ENCODE measurements at regions of chr7 and their contacts with region 1.

Region 1: GRCh38 chr7:1961701-1962276 is 271.0 kb downstream of the MAD1L1 start:
- DNase-seq: peak; percentile 31
- ATAC-seq: no peak
- H3K4me3 ChIP-seq: no peak overlapping the region
- H3K27ac ChIP-seq: peak overlapping the region; percentile 71
- H3K4me1 ChIP-seq: no peaks in the 10 kb centered on the region
- H3K27me3 ChIP-seq: no peaks in the 10 kb centered on the region
- CTCF ChIP-seq: no peak

Region 2: GRCh38 chr7:1732072-1732471 is 229.7 kb before region 1 on chr7:
- CTCF ChIA-PET with region 1: no interaction called
- POLR2A ChIA-PET with region 1: interaction called, 11 read pairs
- intact Hi-C with region 1: no loop called
- DNase-seq: no peak
- ATAC-seq: no peak
- H3K4me3 ChIP-seq: no peak overlapping the region
- H3K27ac ChIP-seq: no peak overlapping the region
- H3K4me1 ChIP-seq: no peaks in the 10 kb centered on the region
- H3K27me3 ChIP-seq: peaks cover 58% of the 10 kb centered on the region
- CTCF ChIP-seq: no peak

Region 3: DNA sequence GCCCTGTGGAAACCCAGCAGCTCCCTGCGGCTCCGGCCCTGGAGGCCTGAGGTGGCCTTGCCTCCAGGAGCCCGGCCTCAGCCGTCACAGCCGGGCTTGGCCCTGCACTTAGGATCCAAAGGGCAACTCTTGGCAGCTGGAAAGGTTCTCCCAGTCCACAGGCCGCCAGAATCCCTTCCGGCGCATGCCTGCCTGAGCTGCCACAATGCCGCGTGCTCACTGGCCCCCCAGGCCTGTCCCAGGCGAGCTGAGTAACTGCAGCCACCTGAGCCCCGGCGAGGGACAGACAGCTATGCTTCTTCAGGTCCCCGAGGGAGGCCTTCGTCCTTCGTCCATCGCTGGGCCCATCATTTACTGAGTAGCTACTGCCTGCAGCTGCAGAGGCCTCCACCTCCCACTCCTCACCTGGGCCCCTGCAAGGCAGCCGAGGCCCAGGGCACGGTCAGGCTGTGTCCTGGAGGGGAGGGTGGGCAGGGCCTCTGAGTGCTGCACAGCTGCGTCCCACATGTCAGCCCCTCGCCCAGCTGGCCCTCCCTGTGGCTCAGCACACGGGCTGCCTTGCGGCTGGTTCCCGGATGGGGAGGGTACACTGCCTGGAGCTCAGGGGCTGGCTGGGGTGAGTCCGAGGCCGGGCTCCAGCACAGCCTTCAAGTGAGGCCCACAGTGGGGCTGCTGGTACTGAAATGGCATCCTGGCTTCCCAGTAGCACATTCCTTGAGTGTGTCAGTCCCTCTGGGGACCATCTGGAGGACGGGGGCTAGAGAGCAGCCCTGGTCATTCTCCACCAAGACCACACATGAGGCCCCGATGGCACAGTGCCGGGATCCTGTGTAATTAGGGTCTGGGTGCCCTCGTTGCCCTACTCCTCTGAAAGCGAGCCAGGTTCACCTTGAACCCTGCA is 119.2 kb before region 1 on chr7:
- CTCF ChIA-PET with region 1: no interaction called
- POLR2A ChIA-PET with region 1: no interaction called
- intact Hi-C with region 1: no loop called
- DNase-seq: no peak
- ATAC-seq: no peak
- H3K4me3 ChIP-seq: no peak overlapping the region
- H3K27ac ChIP-seq: no peak overlapping the region
- H3K4me1 ChIP-seq: no peaks in the 10 kb centered on the region
- H3K27me3 ChIP-seq: no peaks in the 10 kb centered on the region
- CTCF ChIP-seq: no peak

Region 4: DNA sequence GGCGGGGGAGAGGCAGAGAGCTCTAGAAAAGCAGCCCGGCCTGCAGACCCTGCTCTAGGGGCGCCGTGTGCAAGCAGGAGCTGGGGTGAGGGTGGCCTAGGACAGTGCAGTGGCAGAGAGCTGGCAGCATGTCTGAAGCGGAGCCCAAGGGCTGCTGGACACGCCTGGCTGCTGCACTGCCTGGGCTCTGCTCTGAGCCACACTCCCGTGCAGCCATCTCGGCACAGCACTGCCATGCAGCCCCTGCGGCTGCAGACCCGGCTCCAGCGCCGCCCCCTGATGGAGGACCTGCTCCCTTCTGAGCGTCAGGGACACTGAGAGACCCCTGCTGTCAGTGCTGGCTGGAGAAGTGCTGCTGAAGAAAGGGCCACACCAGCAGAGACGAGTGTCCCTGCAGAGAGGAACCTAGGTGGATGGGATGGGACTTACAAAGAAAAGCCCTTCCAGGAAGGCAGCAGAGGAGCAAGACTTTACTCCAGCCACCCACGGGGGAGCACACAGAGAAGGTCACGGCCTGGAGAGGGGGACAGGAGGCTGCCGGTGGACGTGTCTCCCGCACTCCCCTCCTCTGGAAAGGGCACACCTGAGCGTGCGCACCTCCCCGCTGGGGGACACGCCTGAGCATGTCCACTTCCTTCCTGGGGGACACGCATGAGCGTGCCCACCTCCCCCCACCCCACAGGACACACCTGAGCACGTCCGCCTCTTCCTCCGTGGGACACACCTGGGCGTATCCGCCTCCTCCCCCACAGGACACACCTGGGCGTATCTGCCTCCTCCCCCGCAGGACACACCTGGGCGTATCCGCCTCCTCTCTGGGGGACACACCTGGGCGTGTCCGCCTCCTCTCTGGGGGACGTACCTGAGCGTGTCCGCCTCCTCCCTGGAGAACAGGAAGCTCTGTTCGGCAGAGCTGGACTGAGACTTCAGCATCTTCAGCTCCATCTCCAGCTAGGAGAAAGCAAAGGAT is 18.1 kb after region 1 on chr7:
- CTCF ChIA-PET with region 1: no interaction called
- POLR2A ChIA-PET with region 1: no interaction called
- intact Hi-C with region 1: no loop called
- DNase-seq: no peak
- ATAC-seq: no peak
- H3K4me3 ChIP-seq: no peak overlapping the region
- H3K27ac ChIP-seq: no peak overlapping the region
- H3K4me1 ChIP-seq: no peaks in the 10 kb centered on the region
- H3K27me3 ChIP-seq: no peaks in the 10 kb centered on the region
- CTCF ChIP-seq: no peak

Region 5: DNA sequence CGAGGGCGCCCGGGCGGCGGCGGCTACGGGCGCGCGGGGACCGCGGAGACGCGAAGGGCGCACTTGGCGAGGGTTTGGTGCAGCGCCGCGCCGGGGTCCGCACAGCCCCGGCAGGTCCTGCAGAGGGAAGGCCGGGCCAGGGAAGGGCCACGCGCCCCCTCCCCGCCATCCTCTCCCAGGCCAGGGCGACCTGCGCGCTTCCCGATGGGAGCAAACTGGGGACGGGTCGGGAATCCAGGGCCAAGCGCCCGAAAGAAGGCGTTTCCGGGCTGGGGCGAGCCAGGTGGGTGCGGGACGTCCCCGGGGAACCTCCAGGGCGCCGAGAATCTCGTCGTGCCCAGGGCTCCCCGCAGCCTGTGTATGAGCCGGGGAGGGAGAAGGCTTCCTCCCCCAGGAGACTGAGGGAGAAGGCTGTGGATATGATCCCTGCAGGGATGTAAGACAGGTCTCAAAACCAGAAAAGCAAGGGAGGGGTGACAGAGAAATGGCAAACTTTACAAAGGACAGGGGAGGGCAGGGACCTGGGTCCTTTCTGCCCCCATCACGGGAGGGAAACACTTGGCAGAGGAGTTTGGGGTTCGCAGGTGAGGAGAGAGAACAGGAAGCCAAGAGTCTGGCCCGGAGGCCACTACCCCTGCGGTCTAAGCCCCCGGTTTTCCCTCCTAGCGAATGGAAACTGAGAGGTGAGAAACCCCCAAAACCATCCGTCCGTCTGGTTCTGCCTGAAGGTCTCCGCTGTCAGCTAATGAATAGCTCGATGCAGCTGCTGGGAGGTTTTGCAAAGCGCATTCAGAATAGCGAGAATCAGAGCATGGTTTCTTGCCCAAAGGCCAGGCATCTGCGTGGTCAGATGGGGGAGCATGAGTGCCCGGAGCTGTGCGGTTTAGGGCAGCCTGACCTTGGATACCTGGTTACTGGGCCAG is 726.9 kb after region 1 on chr7:
- CTCF ChIA-PET with region 1: no interaction called
- POLR2A ChIA-PET with region 1: no interaction called
- intact Hi-C with region 1: no loop called
- DNase-seq: no peak
- ATAC-seq: peak; percentile 31; the same call in 1 of the 2 replicates
- H3K4me3 ChIP-seq: no peak overlapping the region
- H3K27ac ChIP-seq: no peak overlapping the region
- H3K4me1 ChIP-seq: no peaks in the 10 kb centered on the region
- H3K27me3 ChIP-seq: peaks cover 16% of the 10 kb centered on the region
- CTCF ChIP-seq: no peak